Calu3 (cell line): ENCODE measurements at regions of chr14 and their contacts with region 1.

Region 1: GRCh38 chr14:28902930-28903329 is 136.3 kb downstream of the FOXG1 start:
- DNase-seq: no peak
- H3K4me3 Mint-ChIP-seq: no peak overlapping the region
- H3K27ac Mint-ChIP-seq: no peak overlapping the region
- H3K4me1 Mint-ChIP-seq: no peaks in the 10 kb centered on the region
- H3K27me3 Mint-ChIP-seq: no peaks in the 10 kb centered on the region
- CTCF ChIP-seq: no peak

Region 2: DNA sequence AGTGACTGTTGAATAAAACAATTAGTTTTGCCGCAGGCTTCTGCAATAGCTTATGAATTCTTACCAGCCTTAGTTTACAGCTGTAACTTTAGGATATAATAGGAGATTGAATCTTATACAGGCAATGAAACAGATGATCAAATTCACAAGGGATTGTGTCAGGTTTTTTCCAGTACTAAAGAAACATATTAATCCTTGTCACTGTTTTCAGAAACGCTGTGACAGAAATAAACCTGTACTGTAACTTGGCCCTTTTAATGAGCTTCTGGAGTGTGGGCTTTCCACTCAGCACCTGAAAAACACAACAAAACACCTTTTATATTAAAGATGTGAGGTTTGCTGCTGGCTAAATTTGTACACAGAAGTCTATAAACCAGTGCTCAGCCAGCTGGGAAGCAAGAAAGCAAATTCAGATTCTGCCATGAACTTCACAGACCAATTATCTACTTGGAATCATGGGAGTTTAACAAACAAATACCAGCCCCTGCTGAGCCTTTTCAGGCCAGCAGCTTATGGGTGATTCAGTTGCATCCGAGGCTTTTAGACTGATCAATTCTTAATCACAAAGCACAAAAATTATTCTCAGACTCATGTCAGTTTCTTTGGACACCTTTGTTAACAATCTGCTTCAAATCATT is 26.9 kb before region 1 on chr14:
- CTCF ChIA-PET with region 1: no interaction called
- intact Hi-C with region 1: no loop called
- DNase-seq: no peak
- H3K4me3 Mint-ChIP-seq: no peak overlapping the region
- H3K27ac Mint-ChIP-seq: no peak overlapping the region
- H3K4me1 Mint-ChIP-seq: no peaks in the 10 kb centered on the region
- H3K27me3 Mint-ChIP-seq: no peaks in the 10 kb centered on the region
- CTCF ChIP-seq: no peak

Region 3: GRCh38 chr14:28966416-28967233 is 63.7 kb after region 1 on chr14:
- CTCF ChIA-PET with region 1: no interaction called
- intact Hi-C with region 1: loop called (anchors 10 kb)
- DNase-seq: no peak
- H3K4me3 Mint-ChIP-seq: no peak overlapping the region
- H3K27ac Mint-ChIP-seq: no peak overlapping the region
- H3K4me1 Mint-ChIP-seq: no peaks in the 10 kb centered on the region
- H3K27me3 Mint-ChIP-seq: no peaks in the 10 kb centered on the region
- CTCF ChIP-seq: no peak

Region 4: DNA sequence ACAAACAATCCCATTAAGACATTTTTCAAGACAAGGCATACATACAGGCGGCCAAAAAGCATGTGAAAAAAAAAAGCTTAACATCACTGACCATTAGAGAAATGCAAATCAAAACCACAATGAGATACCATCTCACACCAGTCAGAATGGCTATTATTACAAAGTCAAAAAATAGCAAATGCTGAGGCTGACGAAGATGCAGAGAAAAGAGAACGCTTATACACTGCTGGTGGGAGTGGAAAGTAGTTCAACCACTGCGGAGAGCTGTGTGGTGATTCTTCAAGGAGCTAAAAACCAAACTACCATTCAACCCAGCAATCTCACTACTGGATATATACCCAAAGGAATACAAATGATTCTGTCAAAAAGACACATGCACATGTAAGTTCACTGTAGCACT is 80.3 kb after region 1 on chr14:
- CTCF ChIA-PET with region 1: no interaction called
- intact Hi-C with region 1: no loop called
- DNase-seq: no peak
- H3K4me3 Mint-ChIP-seq: no peak overlapping the region
- H3K27ac Mint-ChIP-seq: no peak overlapping the region
- H3K4me1 Mint-ChIP-seq: no peaks in the 10 kb centered on the region
- H3K27me3 Mint-ChIP-seq: no peaks in the 10 kb centered on the region
- CTCF ChIP-seq: no peak